ENCODE measurements at regions of chr2 and their contacts with region 1.

Region 1: GRCh38 chr2:198362740-198363139 is 558.3 kb downstream of the PLCL1 start:
- DNase-seq: no peak
- H3K4me3 ChIP-seq: no peak overlapping the region
- H3K27ac ChIP-seq: no peak overlapping the region
- H3K4me1 ChIP-seq: no peaks in the 10 kb centered on the region
- H3K27me3 ChIP-seq: no peaks in the 10 kb centered on the region
- CTCF ChIP-seq: no peak
- EP300 ChIP-seq: no peak
- POLR2A ChIP-seq: no peak
- RAD21 ChIP-seq: no peak

Region 2: GRCh38 chr2:198339116-198339515 is 23.6 kb before region 1 on chr2:
- CTCF ChIA-PET with region 1: no interaction called
- POLR2A ChIA-PET with region 1: no interaction called
- DNase-seq: no peak
- H3K4me3 ChIP-seq: no peak overlapping the region
- H3K27ac ChIP-seq: no peak overlapping the region
- H3K4me1 ChIP-seq: no peaks in the 10 kb centered on the region; a peak in 1 of 7 replicates
- H3K27me3 ChIP-seq: no peaks in the 10 kb centered on the region
- CTCF ChIP-seq: no peak
- EP300 ChIP-seq: no peak
- POLR2A ChIP-seq: no peak
- RAD21 ChIP-seq: no peak

Region 3: DNA sequence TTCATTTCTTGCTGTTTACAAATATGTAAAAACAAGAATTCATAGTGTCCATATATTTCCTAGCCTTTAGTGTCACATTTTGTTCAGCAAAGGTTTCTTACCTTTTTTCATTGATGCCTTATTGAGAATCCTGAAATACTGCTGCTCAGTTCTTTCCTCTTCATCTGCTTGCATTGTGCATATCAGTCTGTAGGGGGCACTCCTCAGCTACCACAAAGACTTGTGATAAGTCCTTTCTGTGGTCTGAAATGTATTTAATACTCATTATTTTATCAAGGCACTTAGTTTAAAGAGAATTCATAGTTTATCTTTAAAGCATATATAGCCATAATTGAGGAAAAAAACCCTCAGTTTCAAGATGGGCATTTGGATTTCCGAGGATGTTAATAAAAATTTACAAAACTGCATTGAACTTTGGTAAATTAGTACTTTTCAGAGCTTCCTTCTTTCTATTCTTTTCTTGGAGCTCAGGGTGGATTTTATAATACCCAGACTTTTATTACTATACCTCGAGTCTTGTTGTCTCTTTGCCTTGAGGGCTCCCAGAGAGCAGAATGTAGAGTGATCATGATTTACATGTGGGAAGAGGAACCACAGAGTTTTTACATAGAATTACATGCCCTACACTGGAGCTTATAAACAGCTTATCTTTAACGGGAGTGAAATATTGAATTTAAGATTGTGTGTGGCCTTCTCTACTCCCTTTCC is 11.8 kb after region 1 on chr2:
- CTCF ChIA-PET with region 1: interaction called, 12 read pairs
- POLR2A ChIA-PET with region 1: no interaction called
- DNase-seq: peak; percentile 5 to 59
- H3K4me3 ChIP-seq: no peak overlapping the region
- H3K27ac ChIP-seq: no peak overlapping the region
- H3K4me1 ChIP-seq: no peaks in the 10 kb centered on the region
- H3K27me3 ChIP-seq: no peaks in the 10 kb centered on the region
- CTCF ChIP-seq: peak in 2 of 3 experiments; percentile 48 to 72; a peak in 2 of 4 replicates
- EP300 ChIP-seq: no peak
- POLR2A ChIP-seq: no peak
- RAD21 ChIP-seq: peak; percentile 84 to 85

Measured in H1 (cell line).